CD14-positive monocyte (primary cell): ENCODE measurements at regions of chr1 and their contacts with region 1.

Region 1: DNA sequence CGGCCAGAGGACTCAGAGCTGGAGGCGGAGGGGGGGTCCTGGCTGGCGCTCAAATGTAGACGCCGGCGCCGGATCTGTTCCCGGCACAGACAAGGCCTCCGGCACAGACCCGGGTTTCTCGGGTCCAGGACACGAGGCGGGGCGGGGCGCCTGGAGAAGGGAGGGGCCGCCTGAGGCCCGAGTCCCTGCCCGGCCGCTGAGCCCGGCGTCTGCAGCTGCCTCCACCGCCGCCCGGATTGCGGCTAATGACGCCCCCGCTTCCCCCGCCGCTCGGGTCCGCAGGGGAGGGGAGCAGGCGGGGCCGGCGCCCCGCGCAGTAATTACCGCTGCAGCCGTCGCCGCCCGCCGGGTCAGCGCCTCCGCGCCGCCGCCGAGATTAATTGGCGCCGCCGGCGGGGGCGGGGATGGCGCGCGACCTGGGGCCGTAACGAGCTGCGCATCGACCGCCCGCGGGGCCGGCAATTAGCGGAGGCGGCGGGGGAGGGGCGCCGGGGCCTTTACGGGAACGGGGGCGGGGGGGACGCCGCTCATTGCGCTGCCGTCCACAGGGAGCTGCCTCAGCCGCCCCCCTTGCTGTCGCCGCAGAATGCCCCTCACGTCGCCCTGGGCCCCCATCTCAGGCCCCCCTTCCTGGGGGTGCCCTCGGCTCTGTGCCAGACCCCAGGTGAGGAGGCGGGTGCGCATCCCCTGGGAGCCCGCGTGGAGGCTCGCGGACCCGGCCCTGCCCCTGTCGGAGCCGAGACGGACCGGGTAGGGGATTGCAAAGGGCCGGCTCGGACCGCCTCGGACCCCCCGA is 17.3 kb downstream of the NOC2L start:
- DNase-seq: no peak
- H3K4me3 ChIP-seq: no peak overlapping the region
- H3K4me3 Mint-ChIP-seq: peak overlapping the region; percentile 39 to 85
- H3K27ac ChIP-seq: no peak overlapping the region
- H3K27ac Mint-ChIP-seq: no peak overlapping the region
- H3K4me1 ChIP-seq: peaks cover 4 to 30% of the 10 kb centered on the region in 2 donors
- H3K4me1 Mint-ChIP-seq: peaks cover 7% of the 10 kb centered on the region
- H3K27me3 ChIP-seq: peaks cover 23 to 53% of the 10 kb centered on the region in 2 donors
- H3K27me3 Mint-ChIP-seq: peaks cover 41 to 70% (median 57%) of the 10 kb centered on the region in 3 donors
- CTCF ChIP-seq: no peak

Region 2: GRCh38 chr1:890661-891060 is 51.1 kb before region 1 on chr1:
- intact Hi-C with region 1: loop called in 1 of 2 experiments (anchors 5 kb)
- DNase-seq: no peak
- H3K4me3 ChIP-seq: no peak overlapping the region
- H3K4me3 Mint-ChIP-seq: no peak overlapping the region
- H3K27ac ChIP-seq: no peak overlapping the region
- H3K27ac Mint-ChIP-seq: no peak overlapping the region
- H3K4me1 ChIP-seq: no peaks in the 10 kb centered on the region
- H3K4me1 Mint-ChIP-seq: no peaks in the 10 kb centered on the region
- H3K27me3 ChIP-seq: no peaks in the 10 kb centered on the region
- H3K27me3 Mint-ChIP-seq: peaks cover 13 to 21% (median 16%) of the 10 kb centered on the region in 3 donors
- CTCF ChIP-seq: no peak

Region 3: DNA sequence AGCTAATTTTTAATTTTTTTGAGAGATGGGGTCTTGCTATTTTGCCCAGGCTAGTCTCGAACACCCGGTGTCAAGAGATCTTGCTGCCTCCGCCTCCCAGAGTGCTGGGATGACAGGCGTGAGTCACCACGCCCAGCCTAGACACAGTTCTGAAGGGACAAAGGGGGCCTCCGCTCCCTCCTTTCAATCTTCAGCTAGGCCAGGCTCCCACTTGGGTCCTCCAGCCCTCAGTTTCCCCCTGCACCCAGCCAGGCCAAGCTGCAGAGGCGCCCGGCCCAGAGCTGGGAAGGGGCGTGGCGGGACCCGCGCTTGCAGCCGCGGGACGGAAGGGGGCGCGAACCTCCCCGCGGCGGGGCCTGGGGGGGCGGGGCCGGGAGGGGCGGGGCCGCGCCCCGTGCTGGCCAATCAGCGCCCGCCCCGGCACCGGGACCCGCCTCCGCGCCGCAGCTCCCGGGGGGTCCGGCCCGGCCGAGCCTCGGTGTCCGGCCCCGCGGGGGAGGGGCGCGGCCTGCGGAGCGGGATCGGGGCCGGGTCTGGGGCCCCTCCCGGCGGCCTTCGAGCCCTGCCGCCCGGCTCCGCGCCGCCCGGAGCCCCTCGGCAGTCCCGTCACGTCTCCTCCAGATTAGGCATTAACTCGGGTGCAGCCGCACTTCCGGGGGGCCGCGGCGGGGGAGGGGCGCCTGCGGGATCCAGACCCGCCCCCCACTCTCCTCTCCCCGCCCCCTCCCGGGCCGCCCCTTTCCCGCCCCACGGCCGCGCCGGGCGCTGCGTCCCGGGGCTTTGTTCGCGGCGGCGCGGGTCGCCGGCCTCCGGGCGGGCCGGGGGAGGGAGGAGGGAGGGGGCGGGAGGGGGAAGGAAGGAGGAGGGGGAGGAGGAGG is 77.6 kb after region 1 on chr1:
- intact Hi-C with region 1: no loop called
- DNase-seq: peak; percentile 68 to 76 (median 72)
- H3K4me3 ChIP-seq: peak overlapping the region; percentile 30 to 61 (median 31)
- H3K4me3 Mint-ChIP-seq: peak overlapping the region; percentile 73 to 74
- H3K27ac ChIP-seq: no peak overlapping the region
- H3K27ac Mint-ChIP-seq: peak overlapping the region in 1 of 7 donors; percentile 19
- H3K4me1 ChIP-seq: peaks cover 14 to 31% of the 10 kb centered on the region in 2 donors
- H3K4me1 Mint-ChIP-seq: peaks cover 6% of the 10 kb centered on the region
- H3K27me3 ChIP-seq: peaks cover 7 to 36% of the 10 kb centered on the region in 2 donors
- H3K27me3 Mint-ChIP-seq: peaks cover 29 to 42% (median 40%) of the 10 kb centered on the region in 3 donors
- CTCF ChIP-seq: peak; percentile 36